Activated T-helper 1 cell treated with anti-CD3 and anti-CD28 coated beads, Interleukin-12 subunit alpha, Interleukin-12 subunit beta, Interleukin-2, Interleukin-4 antibody, amounts not matched to agents 30 ng/mL and 10 ng/mL and 1 ng/mL, durations not matched to agents 14 hours and 24 hours and 36 hours (primary cell): ENCODE measurements at regions of chr10 and their contacts with region 1.

Region 1: DNA sequence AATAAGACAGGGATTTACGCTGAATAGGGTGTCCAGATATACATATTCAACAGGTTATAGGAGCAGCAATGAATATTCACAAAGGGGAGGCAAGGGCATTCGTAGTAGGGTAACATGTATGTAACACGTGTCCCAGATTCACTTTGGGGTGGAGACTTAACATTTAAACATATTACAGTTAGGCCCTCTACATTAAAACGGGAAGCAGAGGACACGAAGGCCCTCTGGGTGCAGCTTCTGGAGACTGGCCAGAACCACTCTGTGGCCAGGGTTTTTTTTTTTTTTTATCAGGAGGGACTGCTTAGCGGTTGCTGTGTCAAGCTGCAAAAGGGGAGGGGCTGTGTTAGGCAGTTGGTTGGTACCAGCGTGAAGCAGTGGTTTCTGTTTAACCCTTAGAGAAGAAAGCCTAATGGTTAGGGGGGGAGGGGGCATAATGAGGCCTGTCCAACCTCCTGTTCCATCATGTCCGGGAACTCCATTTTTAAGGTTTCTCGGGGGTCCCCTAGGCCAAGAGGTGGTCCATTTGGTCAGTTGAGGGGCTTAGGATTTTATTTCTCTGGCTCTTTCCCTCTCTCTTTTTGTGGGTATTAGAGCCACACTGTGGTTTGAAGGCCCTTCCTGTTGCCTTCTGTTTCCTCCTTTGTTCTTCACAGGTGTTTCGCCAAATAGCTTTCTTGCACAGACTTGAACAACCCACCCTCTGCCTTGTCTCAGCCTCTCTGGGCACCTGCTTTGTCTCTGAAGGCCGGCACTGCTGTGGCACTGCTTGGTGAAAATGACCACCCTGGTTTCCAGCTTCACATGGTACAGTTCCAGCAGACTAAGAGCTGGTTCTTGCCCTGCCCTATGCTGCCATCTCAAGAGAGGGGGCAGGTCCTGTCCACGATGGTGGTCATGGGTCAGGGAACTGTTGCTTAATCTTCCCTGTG is 26.4 kb downstream of the PRF1 start:
- DNase-seq: no peak
- H3K4me3 Mint-ChIP-seq: no peak overlapping the region
- H3K27ac Mint-ChIP-seq: peak overlapping the region; percentile 76
- H3K4me1 Mint-ChIP-seq: peaks cover 49% of the 10 kb centered on the region
- H3K27me3 Mint-ChIP-seq: peaks cover 6% of the 10 kb centered on the region

Region 2: DNA sequence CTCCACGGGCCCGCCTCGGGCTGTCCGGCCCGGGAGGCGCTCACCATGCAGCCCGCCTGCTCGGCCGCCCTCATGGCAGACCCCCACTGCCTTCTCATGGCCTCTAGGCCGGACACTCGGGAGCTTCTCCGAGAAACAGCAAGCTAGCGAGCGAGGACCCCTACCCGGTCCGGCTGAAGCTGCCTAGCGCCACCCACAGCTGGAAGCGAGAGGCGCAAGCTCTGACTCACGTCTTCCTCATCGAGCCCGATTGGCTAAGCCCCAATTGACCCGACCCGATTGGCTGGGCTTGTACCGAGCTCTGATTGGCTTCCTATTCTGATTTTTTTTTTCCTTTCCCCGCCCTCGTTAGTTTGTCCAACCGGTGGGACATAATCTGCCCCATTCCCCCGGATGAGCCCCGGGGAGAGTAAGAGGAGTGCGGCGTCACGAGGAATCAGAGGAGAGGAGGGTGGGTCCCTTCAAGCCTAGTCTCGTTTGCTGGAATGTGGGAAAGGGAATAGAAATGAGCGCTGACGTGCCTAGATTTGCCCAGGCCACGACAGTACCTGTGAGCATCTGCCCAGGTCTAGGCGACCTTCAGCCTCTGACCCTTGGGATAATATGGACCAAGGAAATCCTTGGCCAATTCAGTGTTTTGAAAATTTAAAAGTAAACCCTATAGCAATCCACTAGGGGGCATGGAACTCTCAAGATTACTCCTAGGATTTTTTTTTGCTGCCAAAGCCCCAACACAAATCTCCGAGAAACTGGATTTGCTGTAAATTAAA is 429.5 kb before region 1 on chr10 and contains the start of gene TYSND1:
- intact Hi-C with region 1: loop called (anchors 5 kb)
- DNase-seq: peak; percentile 90
- H3K4me3 Mint-ChIP-seq: peak within 1 kb of the TSS; percentile 92
- H3K27ac Mint-ChIP-seq: peak within 1 kb of the TSS; percentile 96
- H3K4me1 Mint-ChIP-seq: peaks cover 8% of the 10 kb centered on the region
- H3K27me3 Mint-ChIP-seq: no peaks in the 10 kb centered on the region
- total RNA-seq, gene TYSND1: 12.6 and 12.7 TPM in 2 replicates

Region 3: DNA sequence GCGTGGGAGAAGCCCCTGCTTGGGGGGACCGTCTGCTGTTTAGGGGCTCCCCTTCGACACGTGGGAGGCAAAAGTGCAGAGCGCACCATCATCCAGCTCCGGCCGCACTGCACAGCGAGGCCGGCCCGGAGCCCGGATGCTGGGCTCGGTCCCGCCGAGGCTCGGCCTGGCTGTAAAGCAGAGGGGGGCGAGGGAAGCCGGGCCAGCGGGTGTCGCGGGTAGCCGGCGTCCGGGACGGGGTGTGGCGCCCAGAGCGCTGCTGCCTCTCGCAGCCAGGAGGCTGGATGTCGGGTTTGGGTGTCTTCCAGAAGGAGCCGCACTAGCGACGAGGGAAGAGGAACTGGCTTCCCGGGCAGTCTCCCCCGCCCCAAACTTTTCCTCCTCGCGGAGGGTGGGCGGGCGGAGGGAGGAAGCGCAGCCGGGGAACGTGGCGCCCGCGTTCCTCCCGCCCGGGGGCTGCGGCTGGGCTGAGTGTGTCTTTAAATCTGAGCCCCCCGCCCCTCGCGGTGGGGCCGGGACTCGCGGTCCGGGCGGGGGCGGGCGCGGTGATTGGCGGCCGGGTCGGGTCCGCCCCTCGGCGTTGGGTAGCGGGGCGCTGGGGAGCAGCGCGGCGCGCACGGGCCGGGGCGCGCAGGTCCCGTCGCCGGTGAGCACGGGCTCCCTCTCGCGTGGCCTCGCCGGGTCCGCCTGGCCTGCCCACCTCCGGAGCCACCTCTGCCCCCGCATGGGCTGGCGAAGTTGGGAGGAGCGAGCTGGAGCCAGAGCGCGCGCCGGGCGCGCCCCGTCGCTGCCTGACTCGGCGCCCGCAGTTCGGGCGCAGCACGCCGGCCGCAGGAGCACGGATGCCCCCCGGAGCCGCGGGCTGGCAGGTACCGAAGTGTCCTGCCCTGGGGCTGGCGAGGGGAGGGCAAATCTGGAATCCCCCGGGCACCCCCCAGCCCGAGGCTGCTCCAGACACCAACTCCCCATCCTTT is 97.7 kb before region 1 on chr10 and contains the start of gene PALD1:
- intact Hi-C with region 1: loop called (anchors 1 kb)
- DNase-seq: no peak
- H3K4me3 Mint-ChIP-seq: peak within 1 kb of the TSS; percentile 78
- H3K27ac Mint-ChIP-seq: peak within 1 kb of the TSS; percentile 85
- H3K4me1 Mint-ChIP-seq: peaks cover 49% of the 10 kb centered on the region
- H3K27me3 Mint-ChIP-seq: peaks cover 59% of the 10 kb centered on the region
- total RNA-seq, gene PALD1: 0.83 and 0.88 TPM in 2 replicates

Region 4: DNA sequence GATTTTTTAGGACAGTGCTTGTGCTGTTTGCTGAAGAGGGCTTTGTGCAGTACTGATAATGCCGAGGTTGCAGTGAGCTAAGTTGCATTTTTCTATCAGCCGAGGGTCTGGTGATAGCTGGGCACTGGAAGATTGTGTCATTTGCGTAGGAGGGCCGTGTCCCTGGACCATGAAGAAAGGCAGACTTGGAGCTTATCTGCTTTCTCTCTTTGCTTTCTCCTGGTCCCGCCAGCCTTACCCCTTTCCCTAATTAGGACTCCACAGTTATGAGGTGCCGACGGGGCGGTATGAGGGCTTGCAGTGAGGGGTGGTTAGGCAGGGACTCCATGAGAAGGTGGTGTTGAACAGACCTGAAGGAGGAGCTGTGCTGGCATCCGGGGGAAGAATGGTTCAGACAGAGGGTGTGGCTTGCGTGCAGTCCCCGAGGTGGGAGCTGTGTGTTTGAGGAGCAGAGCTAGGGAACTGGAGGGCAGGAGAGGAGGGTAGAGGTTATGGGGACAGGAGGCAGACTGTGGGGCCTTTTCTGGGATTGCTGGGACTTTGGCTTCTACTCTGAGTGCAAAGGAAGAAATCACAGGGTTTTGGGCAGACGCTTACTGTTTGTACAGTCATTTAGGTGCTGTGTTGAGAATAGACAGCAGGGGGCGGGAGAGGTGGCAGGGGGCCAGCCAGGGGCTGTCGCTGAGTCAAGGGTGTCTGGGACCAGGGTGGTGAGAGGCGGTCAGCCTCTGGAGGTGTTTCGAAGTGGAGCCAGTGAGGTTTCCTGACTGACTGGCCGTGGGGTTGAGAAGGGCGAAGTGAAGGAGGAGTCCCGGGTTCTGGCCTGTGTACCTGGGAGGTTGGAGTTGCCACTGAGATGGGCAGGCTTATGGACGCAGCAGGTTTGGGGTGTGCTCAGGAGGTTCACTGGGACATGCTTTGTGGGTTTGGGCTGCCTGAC is 17.0 kb before region 1 on chr10:
- intact Hi-C with region 1: loop called (anchors 1 kb)
- DNase-seq: peak; percentile 50
- H3K4me3 Mint-ChIP-seq: peak overlapping the region; percentile 67
- H3K27ac Mint-ChIP-seq: peak overlapping the region; percentile 65
- H3K4me1 Mint-ChIP-seq: peaks cover 27% of the 10 kb centered on the region
- H3K27me3 Mint-ChIP-seq: no peaks in the 10 kb centered on the region

Region 5: DNA sequence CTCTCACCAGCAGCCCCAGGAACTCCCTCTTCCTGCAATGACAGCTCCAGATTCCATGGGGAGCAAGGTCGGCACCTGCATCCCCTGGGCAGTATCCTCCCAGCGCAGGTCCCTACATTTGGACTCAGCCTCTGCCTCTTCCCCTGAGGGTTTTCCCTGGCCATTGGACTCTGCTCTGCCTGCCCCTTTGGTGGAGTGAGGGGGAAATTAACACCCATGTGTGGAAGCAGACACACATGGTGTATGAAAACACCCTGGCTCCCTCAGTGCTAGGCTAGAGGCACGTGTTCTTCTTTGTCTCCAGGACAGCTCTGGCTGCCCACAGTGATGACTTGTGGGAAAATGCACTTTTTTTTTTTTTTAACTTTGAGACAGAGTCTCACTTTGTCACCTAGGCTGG is 18.0 kb after region 1 on chr10:
- intact Hi-C with region 1: loop called (anchors 2 kb)
- DNase-seq: no peak
- H3K4me3 Mint-ChIP-seq: no peak overlapping the region
- H3K27ac Mint-ChIP-seq: peak overlapping the region; percentile 46
- H3K4me1 Mint-ChIP-seq: peaks cover 33% of the 10 kb centered on the region
- H3K27me3 Mint-ChIP-seq: peaks cover 8% of the 10 kb centered on the region

Region 6: GRCh38 chr10:70619271-70620019 is 43.3 kb after region 1 on chr10:
- intact Hi-C with region 1: loop called (anchors 1 kb)
- DNase-seq: no peak
- H3K4me3 Mint-ChIP-seq: no peak overlapping the region
- H3K27ac Mint-ChIP-seq: peak overlapping the region; percentile 88
- H3K4me1 Mint-ChIP-seq: peaks cover 44% of the 10 kb centered on the region
- H3K27me3 Mint-ChIP-seq: peaks cover 7% of the 10 kb centered on the region

Region 7: DNA sequence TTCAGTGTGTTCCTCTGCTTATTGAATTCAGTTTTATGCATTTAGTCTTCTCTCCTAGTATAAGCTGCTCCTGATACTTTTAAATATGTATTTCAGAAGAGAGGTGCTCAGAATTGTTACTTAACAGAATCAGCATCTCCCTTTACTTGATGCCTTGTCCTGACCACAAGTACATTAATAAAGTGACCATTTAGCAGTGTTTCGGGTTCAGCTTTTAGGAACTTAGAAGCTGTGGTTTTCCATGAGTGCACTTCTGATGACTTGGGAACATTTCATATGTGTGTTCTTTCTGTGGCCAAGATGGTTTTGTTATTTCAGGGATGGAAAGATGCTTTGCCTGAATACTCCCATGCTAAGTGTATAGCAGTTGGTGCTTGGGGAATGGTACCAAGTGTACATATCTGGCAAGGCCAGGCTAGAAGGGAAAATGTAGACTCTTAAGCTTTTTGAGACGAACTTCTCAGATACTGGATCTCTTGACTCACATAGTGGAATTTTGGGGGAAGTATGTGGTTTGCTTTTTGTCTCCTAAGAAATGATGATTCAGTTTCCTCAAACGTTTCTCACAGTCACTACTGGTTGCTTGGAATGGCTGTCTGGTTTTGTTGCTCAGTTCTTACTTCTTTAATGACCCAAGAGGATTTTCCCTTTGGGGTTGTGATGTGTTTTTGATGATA is 256.9 kb after region 1 on chr10:
- intact Hi-C with region 1: loop called (anchors 5 kb)
- DNase-seq: no peak
- H3K4me3 Mint-ChIP-seq: no peak overlapping the region
- H3K27ac Mint-ChIP-seq: peak overlapping the region; percentile 71
- H3K4me1 Mint-ChIP-seq: peaks cover 33% of the 10 kb centered on the region
- H3K27me3 Mint-ChIP-seq: no peaks in the 10 kb centered on the region